Activated CD4-positive, alpha-beta memory T cell treated with anti-CD3 and anti-CD28 coated beads for 36 hours (primary cell): ENCODE measurements at regions of chr12 and their contacts with region 1.

Region 1: GRCh38 chr12:104930388-104931326 is 27.4 kb downstream of the SLC41A2 start:
- DNase-seq: peak; percentile 73
- H3K4me3 Mint-ChIP-seq: no peak overlapping the region
- H3K27ac Mint-ChIP-seq: peak overlapping the region; percentile 39
- H3K4me1 Mint-ChIP-seq: peaks cover 25% of the 10 kb centered on the region
- H3K27me3 Mint-ChIP-seq: no peaks in the 10 kb centered on the region

Region 2: GRCh38 chr12:104890476-104891096 is 40.1 kb before region 1 on chr12:
- CTCF ChIA-PET with region 1: interaction called, 3 read pairs
- POLR2A ChIA-PET with region 1: no interaction called
- intact Hi-C with region 1: loop called (anchors 1 kb)
- DNase-seq: peak; percentile 23
- H3K4me3 Mint-ChIP-seq: no peak overlapping the region
- H3K27ac Mint-ChIP-seq: peak overlapping the region; percentile 46
- H3K4me1 Mint-ChIP-seq: peaks cover 13% of the 10 kb centered on the region
- H3K27me3 Mint-ChIP-seq: no peaks in the 10 kb centered on the region

Region 3: DNA sequence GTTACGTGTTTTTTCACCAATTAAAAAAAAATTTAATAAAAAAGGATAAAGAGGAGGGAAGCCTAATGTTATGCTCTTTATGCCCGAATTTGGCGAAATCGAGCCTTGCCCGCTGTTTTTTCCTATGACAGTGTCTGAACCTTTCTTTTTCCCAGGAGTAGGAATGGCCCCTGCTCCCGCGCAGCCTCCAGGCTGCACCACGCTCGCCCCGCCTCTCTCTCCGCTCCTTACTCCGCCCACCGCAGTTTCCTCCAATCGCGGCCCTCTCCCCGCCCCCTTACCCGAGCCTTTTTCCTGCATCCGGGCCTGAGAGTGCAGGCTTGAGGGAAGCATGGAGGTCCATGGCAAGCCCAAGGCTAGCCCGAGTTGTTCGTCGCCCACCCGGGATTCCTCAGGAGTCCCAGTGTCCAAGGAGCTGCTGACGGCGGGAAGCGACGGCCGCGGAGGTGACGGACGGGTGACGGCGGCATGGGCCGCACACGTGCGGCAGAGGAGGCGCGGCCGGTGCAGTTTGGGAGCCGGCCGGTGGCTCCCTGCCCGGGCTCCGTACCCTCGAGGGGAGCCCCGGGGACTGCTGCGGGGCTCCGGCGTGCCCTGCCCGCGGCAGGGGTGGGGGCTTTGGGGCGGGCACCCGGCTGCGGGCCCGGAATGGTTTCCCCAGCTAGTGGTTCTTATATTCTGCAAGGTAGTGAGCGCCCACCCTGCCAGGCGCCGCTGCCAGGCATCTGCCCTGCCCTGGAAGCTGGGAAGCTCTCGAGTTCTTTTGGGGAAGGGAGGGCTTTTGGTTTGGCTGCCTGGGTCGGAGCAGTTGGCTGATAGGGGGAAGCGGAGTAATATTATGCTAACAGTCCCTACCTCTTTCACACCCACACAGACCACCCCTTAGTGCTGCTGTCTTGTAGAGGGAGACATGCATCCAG is 55.6 kb after region 1 on chr12 and contains the start of gene NOPCHAP1:
- CTCF ChIA-PET with region 1: no interaction called
- POLR2A ChIA-PET with region 1: no interaction called
- intact Hi-C with region 1: loop called (anchors 2 kb)
- DNase-seq: peak; percentile 91
- H3K4me3 Mint-ChIP-seq: peak within 1 kb of the TSS; percentile 77
- H3K27ac Mint-ChIP-seq: peak within 1 kb of the TSS; percentile 59
- H3K4me1 Mint-ChIP-seq: peaks cover 28% of the 10 kb centered on the region
- H3K27me3 Mint-ChIP-seq: peaks cover 3% of the 10 kb centered on the region
- total RNA-seq, gene NOPCHAP1: 30.5 to 30.9 TPM

Region 4: GRCh38 chr12:105020241-105020962 is 89.7 kb after region 1 on chr12:
- CTCF ChIA-PET with region 1: no interaction called
- POLR2A ChIA-PET with region 1: no interaction called
- intact Hi-C with region 1: no loop called
- DNase-seq: no peak
- H3K4me3 Mint-ChIP-seq: no peak overlapping the region
- H3K27ac Mint-ChIP-seq: no peak overlapping the region
- H3K4me1 Mint-ChIP-seq: no peaks in the 10 kb centered on the region
- H3K27me3 Mint-ChIP-seq: no peaks in the 10 kb centered on the region

Region 5: GRCh38 chr12:105036937-105037649 is 106.4 kb after region 1 on chr12:
- CTCF ChIA-PET with region 1: interaction called, 3 read pairs
- POLR2A ChIA-PET with region 1: no interaction called
- intact Hi-C with region 1: loop called (anchors 2 kb)
- DNase-seq: no peak
- H3K4me3 Mint-ChIP-seq: no peak overlapping the region
- H3K27ac Mint-ChIP-seq: peak overlapping the region; percentile 63
- H3K4me1 Mint-ChIP-seq: peaks cover 39% of the 10 kb centered on the region
- H3K27me3 Mint-ChIP-seq: no peaks in the 10 kb centered on the region